ENCODE measurements at regions of chrX and their contacts with region 1.

Region 1: DNA sequence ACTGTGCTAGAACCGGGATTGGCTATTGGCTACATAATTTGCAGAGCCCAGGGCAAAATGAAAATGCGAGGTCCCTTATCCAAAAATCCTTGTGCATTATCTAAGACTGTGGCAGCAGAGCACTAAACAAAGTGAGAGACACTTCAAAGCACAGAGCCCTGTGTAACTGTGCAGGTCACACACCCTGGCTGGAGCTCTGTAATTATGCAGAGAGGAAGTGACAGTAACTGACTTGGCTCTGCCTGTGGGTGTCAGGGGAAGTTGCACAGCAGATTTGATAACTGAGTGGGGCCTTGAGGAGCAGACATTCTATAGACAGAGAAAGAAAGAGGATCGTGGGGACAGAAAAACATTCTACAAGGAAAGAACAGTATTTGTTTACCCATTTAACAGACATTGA is 173.5 kb upstream of the FMR1 start:
- DNase-seq: no peak
- ATAC-seq: no peak
- H3K4me3 ChIP-seq: no peak overlapping the region
- H3K27ac ChIP-seq: no peak overlapping the region
- H3K4me1 ChIP-seq: no peaks in the 10 kb centered on the region
- H3K27me3 ChIP-seq: no peaks in the 10 kb centered on the region

Region 2: DNA sequence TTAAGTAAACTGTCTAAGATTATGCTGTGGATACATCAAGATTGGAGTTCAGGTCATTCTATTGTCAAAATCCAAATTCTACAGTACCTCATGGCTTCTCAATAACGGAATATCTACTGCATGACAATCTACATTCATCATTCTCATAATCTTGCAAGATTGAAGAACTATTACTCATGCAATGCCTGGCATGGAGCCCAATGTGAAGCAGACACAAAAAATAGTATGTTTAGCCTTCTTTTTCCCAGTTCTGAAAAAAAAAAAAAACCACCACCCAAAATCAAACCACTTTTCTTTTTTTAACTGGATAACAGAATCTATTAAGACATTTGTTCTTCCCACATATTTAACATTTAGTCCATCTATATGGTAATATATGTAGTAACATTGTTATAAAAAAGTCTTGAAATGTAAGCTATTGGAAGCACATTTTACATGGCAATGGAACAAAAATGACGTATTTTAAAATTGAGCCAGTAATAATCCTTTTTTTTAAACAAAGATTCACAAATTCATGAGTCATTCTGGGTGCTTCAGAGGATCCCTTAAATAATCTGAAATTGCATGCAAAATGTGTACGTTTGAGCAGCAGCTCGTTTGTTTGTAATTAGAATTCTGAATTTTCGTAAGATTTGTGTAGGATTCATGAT is 58.8 kb before region 1 on chrX:
- intact Hi-C with region 1: loop called in 1 of 4 experiments (anchors 10 kb)
- DNase-seq: peak in 1 of 3 donors; percentile 11
- ATAC-seq: no peak
- H3K4me3 ChIP-seq: no peak overlapping the region
- H3K27ac ChIP-seq: no peak overlapping the region
- H3K4me1 ChIP-seq: no peaks in the 10 kb centered on the region
- H3K27me3 ChIP-seq: no peaks in the 10 kb centered on the region

Region 3: DNA sequence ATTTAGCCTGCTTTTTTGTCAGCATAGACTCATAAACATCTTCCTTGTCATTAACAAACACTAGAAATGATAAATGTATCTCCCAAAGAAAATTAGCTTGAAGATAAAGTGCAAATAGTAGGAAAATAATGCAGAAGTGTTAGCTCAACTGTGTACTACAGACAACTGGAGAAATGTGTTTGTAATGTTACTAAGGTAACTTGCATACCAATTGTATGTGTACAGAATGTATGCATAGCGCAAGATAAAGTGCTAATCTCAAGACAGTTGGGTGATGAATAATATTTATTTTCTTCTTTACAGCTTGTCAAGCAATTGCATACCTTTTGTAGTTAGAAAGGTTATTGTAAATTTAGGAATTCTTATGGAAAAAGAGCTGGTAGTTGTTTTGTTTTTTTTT is 195.6 kb after region 1 on chrX:
- intact Hi-C with region 1: no loop called
- DNase-seq: no peak
- ATAC-seq: no peak
- H3K4me3 ChIP-seq: no peak overlapping the region
- H3K27ac ChIP-seq: no peak overlapping the region
- H3K4me1 ChIP-seq: no peaks in the 10 kb centered on the region
- H3K27me3 ChIP-seq: no peaks in the 10 kb centered on the region